SK-MEL-5 (cell line): ENCODE measurements at regions of chr1 and their contacts with region 1.

Region 1: GRCh38 chr1:183139281-183139942 is 46.7 kb upstream of the LAMC2 start:
- DNase-seq: no peak

Region 2: DNA sequence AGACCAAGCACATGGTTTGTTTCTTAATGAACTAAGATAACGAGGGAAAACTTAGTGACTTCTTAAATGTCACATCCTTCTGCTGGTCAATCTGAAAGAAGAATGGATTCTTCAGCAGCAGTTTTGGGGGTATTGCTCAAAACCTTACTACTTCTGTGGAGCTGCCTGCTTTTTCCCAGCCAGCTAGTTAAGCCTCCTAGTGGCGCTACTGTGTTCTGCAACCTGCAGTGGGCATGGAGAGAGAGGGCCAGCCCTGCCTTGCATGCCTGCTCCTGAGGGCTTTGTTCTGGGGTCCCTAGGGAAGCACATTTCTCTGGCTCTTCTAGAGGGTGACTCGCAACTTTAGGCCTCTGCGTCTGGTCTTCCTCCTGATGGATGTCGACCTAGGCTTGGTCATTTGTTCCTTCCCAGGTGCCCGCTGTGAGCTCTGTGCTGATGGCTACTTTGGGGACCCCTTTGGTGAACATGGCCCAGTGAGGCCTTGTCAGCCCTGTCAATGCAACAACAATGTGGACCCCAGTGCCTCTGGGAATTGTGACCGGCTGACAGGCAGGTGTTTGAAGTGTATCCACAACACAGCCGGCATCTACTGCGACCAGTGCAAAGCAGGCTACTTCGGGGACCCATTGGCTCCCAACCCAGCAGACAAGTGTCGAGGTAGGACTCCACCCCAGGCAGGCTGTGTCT is 88.7 kb after region 1 on chr1:
- in situ Hi-C with region 1: loop called (anchors 25 kb)
- DNase-seq: peak; percentile 70